CD8-positive, alpha-beta T cell (primary cell): ENCODE measurements at regions of chr12 and their contacts with region 1.

Region 1: DNA sequence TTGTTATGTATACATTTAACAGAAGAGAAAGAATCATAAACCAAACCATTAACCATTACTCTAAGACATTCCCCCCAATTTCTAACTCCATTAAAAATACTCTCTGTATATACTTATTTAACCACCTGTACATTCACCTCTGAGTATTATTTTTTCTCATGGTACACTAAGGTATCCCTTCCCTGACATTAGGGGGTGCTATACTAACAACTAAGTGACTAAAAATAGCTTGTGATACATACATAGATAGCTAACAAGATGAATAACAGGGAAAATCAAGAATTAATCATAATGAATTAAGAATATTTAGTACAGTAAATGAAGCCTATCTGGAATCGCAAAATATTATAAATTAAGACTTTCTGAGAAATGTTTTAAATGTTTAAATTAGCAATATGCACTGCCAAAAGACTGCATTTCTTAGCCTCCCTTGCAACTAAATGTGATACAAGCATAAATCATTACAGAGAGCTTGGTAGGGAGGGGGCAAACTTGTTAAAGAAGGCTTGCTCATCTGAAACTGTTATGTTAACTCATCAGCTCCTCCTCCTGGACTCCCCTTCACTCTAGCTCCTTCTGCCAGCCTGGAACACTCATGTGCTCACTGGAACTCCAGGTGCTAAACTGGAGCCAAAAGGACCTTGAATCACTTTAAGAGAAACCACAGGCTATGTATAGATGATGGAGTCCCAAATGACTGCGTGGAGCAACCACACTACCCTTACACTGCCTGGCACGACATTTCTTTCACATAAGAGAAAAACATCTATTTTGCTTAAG is 14.9 kb downstream of the C2CD5 start:
- DNase-seq: peak in 2 of 9 experiments; percentile 45 to 65
- ATAC-seq: peak; percentile 89
- H3K4me3 ChIP-seq: no peak overlapping the region
- H3K4me3 Mint-ChIP-seq: no peak overlapping the region
- H3K27ac ChIP-seq: no peak overlapping the region
- H3K27ac Mint-ChIP-seq: no peak overlapping the region
- H3K4me1 ChIP-seq: no peaks in the 10 kb centered on the region
- H3K4me1 Mint-ChIP-seq: peaks cover 12% of the 10 kb centered on the region
- H3K27me3 ChIP-seq: no peaks in the 10 kb centered on the region
- H3K27me3 Mint-ChIP-seq: no peaks in the 10 kb centered on the region
- CTCF ChIP-seq: peak; percentile 66

Region 2: GRCh38 chr12:22544038-22544979 is 14.8 kb after region 1 on chr12 and contains the start of gene C2CD5:
- CTCF ChIA-PET with region 1: interaction called, 7 read pairs
- POLR2A ChIA-PET with region 1: interaction called, 7 read pairs
- intact Hi-C with region 1: loop called (anchors 2 kb)
- DNase-seq: peak; percentile 92 to 99 (median 95)
- ATAC-seq: peak; percentile 91
- H3K4me3 ChIP-seq: peak within 1 kb of the TSS; percentile 79 to 99
- H3K4me3 Mint-ChIP-seq: peak within 1 kb of the TSS; percentile 94
- H3K27ac ChIP-seq: peak within 1 kb of the TSS; percentile 92
- H3K27ac Mint-ChIP-seq: peak within 1 kb of the TSS; percentile 94
- H3K4me1 ChIP-seq: peaks cover 25% of the 10 kb centered on the region
- H3K4me1 Mint-ChIP-seq: peaks cover 38% of the 10 kb centered on the region
- H3K27me3 ChIP-seq: no peaks in the 10 kb centered on the region
- H3K27me3 Mint-ChIP-seq: no peaks in the 10 kb centered on the region
- CTCF ChIP-seq: peak; percentile 16
- total RNA-seq, gene C2CD5: 19.5 to 24.4 TPM

Region 3: GRCh38 chr12:22631863-22632463 is 102.5 kb after region 1 on chr12:
- CTCF ChIA-PET with region 1: interaction called, 8 read pairs
- POLR2A ChIA-PET with region 1: interaction called, 3 read pairs
- intact Hi-C with region 1: loop called (anchors 1 kb)
- DNase-seq: peak in 2 of 9 experiments; percentile 32 to 54
- ATAC-seq: peak; percentile 58
- H3K4me3 ChIP-seq: no peak overlapping the region
- H3K4me3 Mint-ChIP-seq: no peak overlapping the region
- H3K27ac ChIP-seq: no peak overlapping the region
- H3K27ac Mint-ChIP-seq: no peak overlapping the region
- H3K4me1 ChIP-seq: peaks cover 34% of the 10 kb centered on the region
- H3K4me1 Mint-ChIP-seq: peaks cover 77% of the 10 kb centered on the region
- H3K27me3 ChIP-seq: no peaks in the 10 kb centered on the region
- H3K27me3 Mint-ChIP-seq: no peaks in the 10 kb centered on the region
- CTCF ChIP-seq: peak; percentile 80

Region 4: DNA sequence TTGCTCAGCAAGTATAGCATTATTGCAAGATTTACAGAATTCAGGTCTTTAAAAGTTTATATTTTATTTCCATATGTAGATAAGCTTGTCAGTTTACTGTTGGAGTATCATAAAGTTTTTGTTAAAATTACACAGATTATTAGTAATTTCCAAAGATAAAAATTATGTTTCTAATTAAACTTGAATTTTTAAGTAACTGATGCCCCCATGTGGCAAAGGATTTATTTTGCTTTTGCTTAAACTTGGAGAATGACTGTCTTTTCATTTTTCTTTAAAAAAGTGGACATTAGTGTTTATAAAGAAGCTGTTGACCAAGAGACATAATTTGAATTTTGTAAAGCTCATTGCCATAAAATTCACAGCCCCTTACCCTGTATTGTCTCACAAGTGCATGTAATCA is 141.3 kb after region 1 on chr12:
- CTCF ChIA-PET with region 1: no interaction called
- POLR2A ChIA-PET with region 1: no interaction called
- intact Hi-C with region 1: loop called in 1 of 2 experiments (anchors 1 kb)
- DNase-seq: no peak
- ATAC-seq: no peak
- H3K4me3 ChIP-seq: no peak overlapping the region
- H3K4me3 Mint-ChIP-seq: no peak overlapping the region
- H3K27ac ChIP-seq: no peak overlapping the region
- H3K27ac Mint-ChIP-seq: no peak overlapping the region
- H3K4me1 ChIP-seq: no peaks in the 10 kb centered on the region
- H3K4me1 Mint-ChIP-seq: no peaks in the 10 kb centered on the region
- H3K27me3 ChIP-seq: no peaks in the 10 kb centered on the region
- H3K27me3 Mint-ChIP-seq: no peaks in the 10 kb centered on the region
- CTCF ChIP-seq: no peak